ENCODE measurements at regions of chr1 and their contacts with region 1.

Region 1: GRCh38 chr1:201214461-201214860 is 23.8 kb downstream of the IGFN1 start:
- DNase-seq: no peak
- H3K4me3 ChIP-seq: no peak overlapping the region
- H3K27ac ChIP-seq: no peak overlapping the region
- H3K4me1 ChIP-seq: peaks cover 0 to 3% (median 0%) of the 10 kb centered on the region in 4 experiments; a peak in 1 of 7 replicates
- H3K27me3 ChIP-seq: no peaks in the 10 kb centered on the region
- CTCF ChIP-seq: peak; percentile 65 to 83 (median 82)
- EP300 ChIP-seq: no peak
- POLR2A ChIP-seq: no peak
- RAD21 ChIP-seq: peak; percentile 60 to 68

Region 2: DNA sequence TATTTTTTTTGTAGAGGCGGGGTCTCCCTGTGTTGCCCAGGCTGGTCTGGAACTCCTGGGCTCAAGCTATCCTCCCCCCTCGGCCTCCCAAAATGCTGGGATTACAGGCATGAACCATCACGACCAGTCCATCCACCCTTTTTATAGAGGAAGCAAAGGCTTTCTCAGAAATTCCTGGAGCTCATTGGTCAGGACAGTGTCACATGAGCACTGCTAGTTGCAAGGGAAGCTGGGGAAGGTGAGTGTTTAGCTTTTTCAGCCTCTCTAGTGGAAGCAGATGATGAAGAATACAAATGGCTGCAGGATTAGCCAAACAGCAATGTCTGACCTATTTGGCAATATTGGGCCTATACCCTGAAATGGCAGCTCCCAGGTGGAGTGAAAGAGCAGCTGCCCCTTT is 15.9 kb before region 1 on chr1:
- CTCF ChIA-PET with region 1: interaction called, 12 read pairs
- POLR2A ChIA-PET with region 1: no interaction called
- DNase-seq: no peak
- H3K4me3 ChIP-seq: no peak overlapping the region
- H3K27ac ChIP-seq: no peak overlapping the region
- H3K4me1 ChIP-seq: no peaks in the 10 kb centered on the region
- H3K27me3 ChIP-seq: no peaks in the 10 kb centered on the region
- CTCF ChIP-seq: no peak
- EP300 ChIP-seq: no peak
- POLR2A ChIP-seq: no peak
- RAD21 ChIP-seq: no peak

Region 3: DNA sequence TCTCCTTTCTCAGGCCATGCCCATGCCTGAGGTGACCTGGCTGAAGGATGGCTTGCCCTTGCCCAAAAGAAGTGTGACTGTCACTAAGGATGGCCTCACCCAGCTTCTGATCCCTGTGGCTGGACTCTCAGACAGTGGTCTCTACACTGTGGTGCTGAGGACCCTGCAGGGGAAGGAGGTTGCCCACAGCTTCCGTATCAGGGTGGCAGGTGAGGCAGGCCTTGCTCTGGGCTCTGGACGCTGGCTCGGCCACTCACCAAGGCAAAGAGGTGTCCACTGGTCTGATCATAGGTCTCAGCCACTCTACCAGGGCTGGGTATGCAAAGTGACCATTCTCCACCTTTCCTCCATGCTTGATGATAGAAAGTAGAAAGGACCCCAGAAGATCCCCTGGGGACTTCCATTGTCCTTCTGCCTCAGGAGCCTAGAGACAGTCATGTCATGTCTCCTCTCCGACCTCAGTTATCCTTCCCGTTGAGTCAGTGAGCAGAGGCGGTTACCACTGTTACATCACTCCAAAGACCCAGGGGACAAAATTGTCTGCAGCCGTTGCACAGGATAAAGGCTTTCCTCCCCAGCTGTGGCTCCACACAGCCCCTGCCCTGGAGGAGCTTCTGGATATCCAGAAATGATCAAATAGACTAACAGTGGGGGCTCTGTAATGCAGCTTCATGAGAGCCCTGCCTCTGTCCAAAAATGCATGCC is 10.4 kb after region 1 on chr1:
- CTCF ChIA-PET with region 1: interaction called, 19 read pairs
- POLR2A ChIA-PET with region 1: interaction called, 4 read pairs
- DNase-seq: peak in 1 of 2 experiments; percentile 29
- H3K4me3 ChIP-seq: no peak overlapping the region
- H3K27ac ChIP-seq: no peak overlapping the region
- H3K4me1 ChIP-seq: no peaks in the 10 kb centered on the region
- H3K27me3 ChIP-seq: no peaks in the 10 kb centered on the region
- CTCF ChIP-seq: no peak
- EP300 ChIP-seq: no peak
- POLR2A ChIP-seq: no peak
- RAD21 ChIP-seq: no peak

Measured in H1 (cell line).